Ovary (tissue), 10 donors: ENCODE measurements at regions of chr5 and their contacts with region 1.

Region 1: DNA sequence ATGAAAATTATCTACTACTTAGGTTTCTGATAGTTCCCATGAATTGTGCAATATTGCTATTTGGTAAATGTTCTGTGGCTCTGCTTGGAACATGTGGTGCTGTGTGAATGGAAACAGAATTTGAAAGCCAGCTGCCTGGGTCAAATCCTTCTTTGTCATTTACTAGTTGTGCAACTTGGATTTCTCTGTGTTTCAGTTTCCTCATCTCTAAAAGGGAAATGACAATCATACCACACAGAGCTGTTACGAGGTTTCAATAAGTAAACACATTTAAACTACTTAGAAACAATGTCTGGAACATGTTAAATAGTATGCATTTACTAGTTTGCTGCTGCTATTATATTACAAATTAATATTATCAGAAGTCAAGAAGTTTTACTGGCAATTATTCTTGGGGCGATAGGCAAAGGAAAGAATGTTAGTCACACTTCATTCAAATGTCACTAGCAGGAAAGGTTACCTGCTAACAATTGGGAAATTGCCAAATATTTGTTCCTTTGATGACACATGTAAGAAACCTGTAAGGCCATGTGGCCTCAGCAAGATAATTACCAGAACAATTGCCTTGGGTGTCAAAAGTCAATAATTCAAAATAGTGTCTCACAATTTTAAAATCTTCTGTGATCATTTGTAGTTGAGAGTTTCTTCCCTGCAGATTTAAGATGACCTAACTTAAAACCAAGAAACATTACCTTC is 184.8 kb downstream of the KIAA0825 start:
- DNase-seq: no peak
- H3K4me3 ChIP-seq: no peak overlapping the region
- H3K27ac ChIP-seq: no peak overlapping the region
- H3K4me1 ChIP-seq: no peaks in the 10 kb centered on the region
- H3K27me3 ChIP-seq: no peaks in the 10 kb centered on the region
- CTCF ChIP-seq: no peak
- EP300 ChIP-seq: no peak
- POLR2A ChIP-seq: no peak

Region 2: DNA sequence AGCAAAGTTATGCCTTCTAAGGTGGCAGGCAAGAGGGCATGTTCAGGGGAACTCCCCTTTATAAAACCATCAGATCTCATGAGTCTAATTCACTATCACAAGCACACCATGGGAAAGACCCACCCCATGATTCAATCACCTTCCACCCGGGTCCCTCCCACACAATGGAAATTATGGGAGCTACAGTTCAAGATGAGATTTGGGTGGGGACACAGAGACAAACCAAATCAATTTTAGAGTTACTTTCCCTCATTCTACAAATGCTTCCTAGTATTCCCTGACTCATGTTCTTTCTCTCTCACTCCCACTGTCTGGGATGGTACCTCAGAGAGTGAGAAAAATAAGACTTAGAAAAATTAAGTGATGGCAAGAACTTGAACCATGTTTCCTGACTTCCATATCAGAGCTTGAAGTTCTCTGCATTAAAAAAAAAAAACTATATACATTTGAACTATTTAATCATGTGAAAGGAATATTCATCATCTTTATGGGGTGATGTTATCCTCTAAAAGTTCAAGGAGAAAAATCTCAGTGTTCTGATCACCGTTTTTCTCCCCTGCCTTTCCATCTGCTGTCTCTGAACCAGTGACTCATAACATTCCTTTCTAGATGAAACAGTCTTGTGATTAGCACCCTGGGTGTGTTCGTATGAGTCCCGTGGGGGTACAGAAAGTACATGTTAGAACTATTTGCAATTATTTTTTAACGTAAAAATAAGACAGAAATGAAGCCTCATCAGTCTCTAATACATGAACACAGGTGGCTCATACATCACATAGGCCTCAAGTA is 467.8 kb after region 1 on chr5:
- intact Hi-C with region 1: loop called in 1 of 4 experiments (anchors 5 kb)
- DNase-seq: no peak
- H3K4me3 ChIP-seq: no peak overlapping the region
- H3K27ac ChIP-seq: no peak overlapping the region
- H3K4me1 ChIP-seq: no peaks in the 10 kb centered on the region
- H3K27me3 ChIP-seq: no peaks in the 10 kb centered on the region
- CTCF ChIP-seq: no peak
- EP300 ChIP-seq: no peak
- POLR2A ChIP-seq: no peak